Dendritic cell treated with granulocyte-macrophage colony-stimulating factor and Interleukin-4, amounts not matched to agents 40 ng/mL and 50 ng/mL, for 4 days (primary cell): ENCODE measurements at regions of chr10 and their contacts with region 1.

Region 1: DNA sequence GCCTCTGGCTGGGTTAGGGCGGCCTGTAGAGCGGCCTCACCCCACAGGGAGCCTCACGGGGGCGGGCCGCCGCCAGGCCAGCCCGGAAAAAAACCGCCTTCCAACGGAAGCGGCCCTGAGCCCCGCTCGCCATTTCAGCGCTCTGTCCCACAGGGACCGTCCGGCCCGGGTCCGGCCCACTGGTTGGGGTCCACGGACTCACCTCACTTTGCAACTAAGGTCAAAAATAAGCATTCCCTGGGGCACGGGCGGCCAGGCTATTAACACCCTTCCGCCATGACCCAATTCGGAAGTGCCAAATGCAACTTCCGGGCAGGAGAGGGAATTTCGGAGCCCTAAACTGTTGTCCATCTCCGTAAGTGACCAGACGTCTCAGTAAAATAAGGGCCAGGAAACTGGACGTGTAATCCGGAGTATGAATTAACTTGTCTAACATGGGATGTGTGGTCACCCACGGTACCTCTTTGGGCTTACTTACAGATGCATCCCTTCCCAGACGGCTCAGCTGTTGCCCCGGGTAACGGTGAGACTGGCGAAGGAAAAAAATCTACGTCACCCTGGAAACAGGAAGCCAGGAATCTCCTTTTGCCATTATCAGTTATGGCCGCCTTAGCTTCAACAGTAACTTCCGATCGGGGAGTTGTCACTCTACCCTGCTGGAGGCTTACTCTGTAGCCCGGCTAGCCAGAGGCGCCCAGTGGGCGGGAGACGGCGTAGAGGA is at the start of gene BBIP1:
- H3K4me3 Mint-ChIP-seq: peak within 1 kb of the TSS; percentile 97
- H3K27ac Mint-ChIP-seq: peak within 1 kb of the TSS; percentile 99
- H3K4me1 Mint-ChIP-seq: peaks cover 26% of the 10 kb centered on the region
- H3K27me3 Mint-ChIP-seq: no peaks in the 10 kb centered on the region

Region 2: DNA sequence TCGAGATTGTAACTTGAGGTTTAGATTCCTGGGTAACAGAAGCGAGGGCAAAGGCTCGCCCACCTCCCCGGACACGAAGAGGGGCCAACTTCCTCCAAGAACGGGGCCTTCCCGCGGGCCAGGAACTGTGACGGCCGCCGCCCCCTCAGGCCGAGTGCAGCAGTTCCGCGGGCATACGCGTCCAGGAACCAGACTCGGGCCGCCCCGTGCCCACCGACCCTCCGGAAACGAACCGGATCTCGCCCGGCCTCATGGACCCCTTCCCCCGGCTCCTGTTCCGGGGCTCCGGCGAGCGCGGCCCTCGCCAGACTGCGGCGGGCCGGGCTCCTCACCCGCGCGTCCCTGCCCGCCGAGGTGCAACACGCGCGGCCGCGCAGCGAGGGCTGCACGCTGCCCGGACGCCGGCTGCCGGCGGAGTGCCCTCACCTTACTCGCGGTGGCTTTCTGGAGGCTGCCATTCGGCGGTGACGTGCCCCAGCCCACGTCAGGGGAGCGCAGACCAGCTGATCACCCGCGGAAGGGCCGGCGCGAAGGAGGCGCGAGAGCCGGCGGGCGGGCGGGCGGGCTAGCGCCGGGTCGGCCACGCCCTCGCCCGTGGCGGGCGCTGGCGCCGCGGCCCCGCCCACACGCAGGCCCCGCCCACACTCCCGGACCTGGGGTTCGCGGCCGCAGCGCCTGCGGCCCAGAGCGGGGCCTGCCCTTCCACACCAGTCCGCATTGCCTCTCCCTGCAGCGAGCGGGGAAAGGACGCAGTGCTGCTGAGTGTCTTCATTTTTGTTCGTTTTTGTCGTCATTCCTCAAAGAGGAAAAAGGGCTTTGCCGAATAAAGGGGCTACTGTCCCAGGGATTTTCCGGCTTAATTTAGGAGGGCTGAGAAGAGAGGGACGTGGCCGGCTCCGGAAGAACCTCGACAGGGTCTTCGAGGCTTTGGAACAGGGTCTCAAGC is 995.6 kb before region 1 on chr10 and contains the start of gene XPNPEP1:
- intact Hi-C with region 1: loop called (anchors 5 kb)
- H3K4me3 Mint-ChIP-seq: peak within 1 kb of the TSS; percentile 86
- H3K27ac Mint-ChIP-seq: peak within 1 kb of the TSS; percentile 89
- H3K4me1 Mint-ChIP-seq: peaks cover 46% of the 10 kb centered on the region
- H3K27me3 Mint-ChIP-seq: no peaks in the 10 kb centered on the region

Region 3: DNA sequence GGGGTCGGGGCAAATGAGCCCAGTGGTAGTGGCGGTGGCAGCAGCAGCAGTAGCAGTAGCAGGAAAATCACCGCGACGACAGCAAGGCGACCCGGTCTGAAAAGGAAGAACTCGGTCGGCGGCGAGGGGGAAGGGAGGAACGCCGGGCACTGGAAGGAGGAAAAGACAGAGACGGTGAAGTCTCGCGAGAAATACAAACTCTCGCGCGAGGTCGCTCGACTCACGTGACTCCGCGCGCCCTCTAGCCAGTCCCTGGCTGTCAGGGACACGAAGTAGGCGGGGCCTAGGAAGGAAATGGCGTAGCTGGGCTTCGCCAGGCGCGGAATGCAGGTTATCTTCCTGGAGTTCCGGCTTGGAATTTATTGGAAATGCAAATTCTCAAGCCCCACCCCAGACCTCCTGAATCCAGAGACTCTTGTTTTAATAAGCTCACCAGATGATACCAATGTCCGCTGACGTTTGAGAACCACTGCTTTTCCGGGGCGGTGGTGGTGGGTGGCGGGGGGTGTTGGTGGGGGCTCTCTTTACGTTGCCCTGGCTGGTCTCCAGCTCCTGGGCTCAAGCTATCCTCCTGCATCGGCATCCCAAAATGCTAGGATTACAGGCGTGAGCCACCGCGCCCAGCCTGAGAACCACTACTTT is 613.9 kb before region 1 on chr10 and contains the start of gene SMNDC1:
- intact Hi-C with region 1: loop called (anchors 10 kb)
- H3K4me3 Mint-ChIP-seq: peak within 1 kb of the TSS; percentile 80
- H3K27ac Mint-ChIP-seq: peak within 1 kb of the TSS; percentile 81
- H3K4me1 Mint-ChIP-seq: peaks cover 32% of the 10 kb centered on the region
- H3K27me3 Mint-ChIP-seq: no peaks in the 10 kb centered on the region

Region 4: DNA sequence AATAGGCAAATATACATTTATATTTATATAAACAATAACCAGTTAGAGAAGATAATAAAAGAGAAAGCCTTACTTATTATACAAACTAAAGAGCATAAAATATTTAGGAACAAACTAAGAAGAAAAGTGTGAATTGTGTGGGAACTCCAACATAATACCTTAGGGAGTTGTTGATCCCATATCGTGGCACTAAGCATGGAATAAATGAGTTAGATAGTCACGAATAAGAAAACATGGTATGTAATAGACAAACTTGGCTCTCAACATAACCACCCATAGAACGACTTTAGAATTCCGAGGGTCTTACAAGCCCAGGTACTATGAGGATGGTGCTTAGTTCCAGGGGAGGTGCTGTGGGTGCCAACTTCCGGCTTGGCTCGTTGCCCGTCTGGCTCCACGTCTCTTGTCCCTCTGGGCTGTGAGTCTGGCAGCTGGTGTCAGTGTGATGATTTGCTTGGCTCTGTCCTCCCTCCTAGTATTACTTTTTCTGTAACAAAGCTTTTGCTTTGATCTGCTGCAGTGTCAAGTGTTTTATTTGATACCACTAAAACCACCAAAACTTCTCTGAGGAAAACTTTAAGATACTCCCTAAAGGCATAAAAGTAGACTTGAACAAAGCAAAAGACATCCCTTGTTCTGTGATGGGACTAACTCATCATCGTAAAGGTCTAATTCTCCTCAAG is 284.1 kb before region 1 on chr10:
- intact Hi-C with region 1: no loop called
- H3K4me3 Mint-ChIP-seq: no peak overlapping the region
- H3K27ac Mint-ChIP-seq: no peak overlapping the region
- H3K4me1 Mint-ChIP-seq: no peaks in the 10 kb centered on the region
- H3K27me3 Mint-ChIP-seq: peaks cover 26% of the 10 kb centered on the region

Region 5: DNA sequence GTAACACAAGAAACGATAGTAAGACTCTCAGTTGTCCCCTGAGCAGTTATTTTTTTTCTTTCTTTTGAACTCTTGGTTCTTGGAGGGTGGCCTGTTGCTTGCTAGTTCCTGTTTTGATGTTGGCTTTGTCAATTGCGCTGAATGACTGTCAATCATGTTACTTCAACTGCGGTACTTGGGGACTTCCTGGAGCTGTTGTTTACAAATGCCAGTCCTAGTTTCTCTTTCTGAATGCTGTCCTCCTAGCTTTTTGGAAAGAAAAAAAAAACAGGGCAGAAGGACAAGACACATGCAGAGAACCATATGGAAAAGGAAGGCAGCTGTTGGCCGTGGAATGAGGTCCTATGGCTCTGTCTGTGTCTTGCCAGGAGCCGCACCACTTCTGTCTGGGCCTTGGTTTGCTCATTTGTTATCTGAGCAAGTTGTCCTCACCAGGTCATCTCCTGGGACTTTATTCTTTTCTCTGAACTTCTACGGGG is 54.1 kb before region 1 on chr10:
- intact Hi-C with region 1: loop called (anchors 2 kb)
- H3K4me3 Mint-ChIP-seq: peak overlapping the region; percentile 77
- H3K27ac Mint-ChIP-seq: peak overlapping the region; percentile 99
- H3K4me1 Mint-ChIP-seq: peaks cover 79% of the 10 kb centered on the region
- H3K27me3 Mint-ChIP-seq: no peaks in the 10 kb centered on the region

Region 6: DNA sequence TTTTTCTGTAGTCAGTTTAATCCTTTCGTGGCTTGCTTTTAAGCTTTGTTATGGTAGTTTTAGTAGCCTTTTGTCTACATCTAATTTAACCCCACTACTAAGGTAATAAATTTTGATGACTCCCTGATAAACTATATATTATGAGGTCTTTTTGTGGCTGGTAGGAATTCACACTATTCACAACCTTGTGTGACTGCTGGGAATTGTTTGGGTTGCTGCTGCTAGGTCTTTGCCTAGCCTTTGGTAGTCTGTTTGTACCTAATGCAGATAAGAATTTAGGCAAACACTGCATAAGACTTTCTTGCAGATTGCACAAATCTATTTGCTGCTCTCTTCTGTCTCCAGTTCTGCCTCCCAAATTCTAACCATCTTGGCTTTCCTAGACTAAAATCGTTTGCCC is 58.9 kb after region 1 on chr10:
- intact Hi-C with region 1: loop called (anchors 10 kb)
- H3K4me3 Mint-ChIP-seq: no peak overlapping the region
- H3K27ac Mint-ChIP-seq: no peak overlapping the region
- H3K4me1 Mint-ChIP-seq: peaks cover 58% of the 10 kb centered on the region
- H3K27me3 Mint-ChIP-seq: no peaks in the 10 kb centered on the region

Region 7: GRCh38 chr10:110993024-110993693 is 74.4 kb after region 1 on chr10:
- intact Hi-C with region 1: no loop called
- H3K4me3 Mint-ChIP-seq: no peak overlapping the region
- H3K27ac Mint-ChIP-seq: no peak overlapping the region
- H3K4me1 Mint-ChIP-seq: peaks cover 11% of the 10 kb centered on the region
- H3K27me3 Mint-ChIP-seq: no peaks in the 10 kb centered on the region

Region 8: GRCh38 chr10:111018021-111018420 is 99.2 kb after region 1 on chr10:
- intact Hi-C with region 1: loop called (anchors 10 kb)
- H3K4me3 Mint-ChIP-seq: no peak overlapping the region
- H3K27ac Mint-ChIP-seq: peak overlapping the region; percentile 12
- H3K4me1 Mint-ChIP-seq: peaks cover 26% of the 10 kb centered on the region
- H3K27me3 Mint-ChIP-seq: no peaks in the 10 kb centered on the region